Panc1 (cell line): ENCODE measurements at regions of chr7 and their contacts with region 1.

Region 1: DNA sequence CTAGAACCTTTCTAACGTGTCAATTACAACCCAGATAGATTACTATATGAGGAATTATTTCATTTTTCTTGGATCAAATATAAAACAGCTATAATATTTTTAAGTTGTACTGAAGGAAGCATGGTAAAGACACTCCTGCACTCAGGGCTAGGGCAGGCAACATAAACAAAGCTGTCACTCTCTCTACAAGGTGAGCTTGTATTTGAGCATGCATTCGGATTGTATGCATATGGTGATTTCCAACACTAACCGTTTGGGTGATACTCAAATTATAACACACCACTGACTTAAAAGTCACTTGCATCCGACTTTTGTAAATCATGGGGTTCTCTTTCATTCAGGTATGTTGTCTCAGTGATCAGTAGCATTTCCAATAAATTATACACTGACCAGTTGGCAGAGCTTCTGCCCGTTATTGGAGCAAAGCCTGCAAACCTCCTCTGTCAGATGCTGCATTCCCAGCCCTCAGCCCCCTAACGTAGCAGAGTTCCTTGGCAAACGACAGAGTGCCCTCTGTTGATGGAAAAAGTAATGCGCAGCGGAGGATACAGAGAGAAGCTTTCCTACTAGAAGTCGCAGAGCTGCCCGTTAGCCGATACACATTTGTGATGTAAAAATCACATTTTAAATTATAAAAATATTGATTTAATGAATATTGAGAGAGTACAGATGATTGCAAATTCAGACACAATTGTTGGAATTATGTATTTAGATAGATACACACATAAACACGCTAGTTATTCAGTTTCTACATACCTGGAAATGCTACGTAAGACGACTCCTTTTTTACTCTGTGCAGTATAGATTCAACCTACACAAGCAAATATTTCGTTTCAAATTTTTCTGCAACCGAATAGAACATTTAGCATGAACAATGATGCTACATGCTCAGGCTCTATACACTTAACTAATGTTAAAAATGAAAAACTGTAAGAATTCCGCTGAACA is 173.9 kb upstream of the SP4 start:
- DNase-seq: peak; percentile 47
- ATAC-seq: peak; percentile 98
- H3K4me3 ChIP-seq: no peak overlapping the region
- H3K27ac ChIP-seq: no peak overlapping the region
- H3K4me1 ChIP-seq: peaks cover 8% of the 10 kb centered on the region; the same call in 1 of the 2 replicates
- H3K27me3 ChIP-seq: peaks cover 43% of the 10 kb centered on the region
- CTCF ChIP-seq: peak; percentile 90

Region 2: DNA sequence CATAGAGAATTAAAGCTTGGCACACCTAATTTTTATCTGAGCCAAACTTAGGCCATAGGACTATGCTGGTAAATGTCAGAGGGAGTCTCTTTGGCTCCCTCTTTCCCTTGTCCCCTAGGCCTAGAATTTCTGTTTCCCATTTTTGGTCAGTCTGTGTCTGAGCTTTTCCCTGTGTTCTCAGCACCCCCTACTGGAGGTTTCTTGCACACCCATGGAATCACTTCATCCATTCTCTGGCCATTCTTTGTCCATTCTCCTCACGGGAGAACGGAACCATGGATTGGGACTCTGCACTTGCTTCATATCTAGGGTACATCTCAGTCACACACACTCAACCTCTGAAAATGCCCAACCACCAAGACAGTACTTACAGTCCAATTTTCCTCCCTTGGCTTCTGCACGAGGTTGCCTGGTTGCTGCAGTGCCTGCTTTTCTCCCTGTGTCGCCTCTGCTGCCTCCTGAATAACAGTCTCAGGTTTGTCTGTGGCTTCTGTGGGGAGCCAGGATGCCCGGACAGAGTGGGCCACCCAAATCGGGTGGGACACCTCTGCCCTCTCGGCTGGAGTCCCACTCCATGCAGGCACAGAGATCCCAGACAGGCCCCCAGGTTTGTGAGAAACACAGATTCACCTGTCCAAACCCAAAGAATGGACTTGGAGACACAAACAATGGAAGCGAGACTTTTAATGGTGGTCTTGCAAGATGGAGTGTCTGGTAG is 253.8 kb after region 1 on chr7:
- CTCF ChIA-PET with region 1: no interaction called
- POLR2A ChIA-PET with region 1: no interaction called
- in situ Hi-C with region 1: no loop called
- intact Hi-C with region 1: loop called (anchors 5 kb)
- DNase-seq: no peak
- ATAC-seq: no peak; the same call in 1 of the 2 replicates
- H3K4me3 ChIP-seq: no peak overlapping the region
- H3K27ac ChIP-seq: no peak overlapping the region
- H3K4me1 ChIP-seq: no peaks in the 10 kb centered on the region
- H3K27me3 ChIP-seq: no peaks in the 10 kb centered on the region
- CTCF ChIP-seq: peak; percentile 61

Region 3: DNA sequence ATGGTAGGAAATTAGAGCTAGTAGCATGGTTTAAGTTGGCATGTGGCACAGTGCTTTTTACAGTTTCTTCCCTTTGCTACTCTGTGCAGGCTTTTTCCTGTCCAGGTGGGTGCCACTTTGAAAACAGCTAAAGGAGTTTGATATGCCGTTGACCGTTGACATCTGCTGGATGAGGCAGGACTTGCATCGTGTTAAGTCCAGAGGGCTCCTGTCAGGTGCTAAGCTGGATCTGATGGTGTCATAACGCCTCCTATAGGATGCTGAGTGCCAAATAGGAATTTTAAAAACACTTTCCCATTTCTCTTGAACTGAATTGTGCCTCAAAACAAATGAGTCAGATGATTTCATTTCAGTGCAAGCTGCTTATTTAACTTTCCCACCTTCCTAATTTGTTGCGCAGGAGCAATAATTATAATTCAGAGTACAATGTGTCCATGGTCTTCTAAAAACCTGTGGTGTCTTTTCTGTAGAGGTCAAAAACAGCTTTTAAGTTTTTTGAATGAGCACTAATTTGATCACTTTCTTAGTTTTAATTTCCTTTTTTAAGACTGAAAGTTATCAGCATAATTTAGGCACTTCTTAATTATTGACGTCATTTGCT is 513.4 kb after region 1 on chr7:
- CTCF ChIA-PET with region 1: interaction called, 10 read pairs
- POLR2A ChIA-PET with region 1: no interaction called
- in situ Hi-C with region 1: no loop called
- intact Hi-C with region 1: loop called (anchors 1 kb)
- DNase-seq: peak; percentile 75
- ATAC-seq: peak; percentile 99
- H3K4me3 ChIP-seq: no peak overlapping the region
- H3K27ac ChIP-seq: no peak overlapping the region
- H3K4me1 ChIP-seq: no peaks in the 10 kb centered on the region
- H3K27me3 ChIP-seq: peaks cover 7% of the 10 kb centered on the region
- CTCF ChIP-seq: peak; percentile 93